ENCODE measurements at regions of chr10 and their contacts with region 1.

Region 1: DNA sequence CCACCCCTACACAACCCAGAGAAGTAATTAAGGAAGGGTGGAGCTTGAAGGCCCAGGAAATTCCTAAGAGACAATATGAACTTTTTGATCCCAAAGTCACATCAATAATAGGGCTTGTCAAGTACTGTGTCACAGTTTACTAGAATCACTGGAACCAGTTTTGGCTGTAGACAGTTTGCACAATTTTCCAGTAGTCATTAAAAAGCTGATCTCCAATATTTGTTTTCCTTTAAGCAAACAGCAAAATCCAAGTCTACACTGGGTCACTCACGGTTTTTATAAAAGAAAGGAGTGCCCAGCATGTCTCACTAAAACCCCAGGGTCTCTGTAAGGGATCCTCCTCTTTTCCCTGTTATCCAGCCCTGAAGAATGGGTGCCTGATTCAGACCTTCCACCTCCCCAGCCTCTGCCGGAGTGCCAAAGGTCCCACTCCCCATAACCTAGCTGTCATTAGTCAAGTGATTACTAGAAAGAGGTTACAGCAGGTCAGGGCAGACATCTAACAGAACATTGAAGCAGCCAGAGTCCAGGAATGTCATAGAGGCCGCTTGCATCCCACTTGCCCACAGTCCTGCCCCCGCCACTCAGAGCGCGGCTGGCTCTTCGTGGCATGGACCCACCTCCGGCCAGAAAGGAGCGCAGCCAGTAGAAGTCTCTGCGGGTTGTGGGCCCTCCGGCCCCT is 556 bp downstream of the SLC25A16 start:
- DNase-seq: no peak
- H3K4me3 Mint-ChIP-seq: peak overlapping the region; percentile 93
- H3K27ac Mint-ChIP-seq: peak overlapping the region; percentile 87
- H3K4me1 Mint-ChIP-seq: peaks cover 5% of the 10 kb centered on the region
- H3K27me3 Mint-ChIP-seq: no peaks in the 10 kb centered on the region

Region 2: DNA sequence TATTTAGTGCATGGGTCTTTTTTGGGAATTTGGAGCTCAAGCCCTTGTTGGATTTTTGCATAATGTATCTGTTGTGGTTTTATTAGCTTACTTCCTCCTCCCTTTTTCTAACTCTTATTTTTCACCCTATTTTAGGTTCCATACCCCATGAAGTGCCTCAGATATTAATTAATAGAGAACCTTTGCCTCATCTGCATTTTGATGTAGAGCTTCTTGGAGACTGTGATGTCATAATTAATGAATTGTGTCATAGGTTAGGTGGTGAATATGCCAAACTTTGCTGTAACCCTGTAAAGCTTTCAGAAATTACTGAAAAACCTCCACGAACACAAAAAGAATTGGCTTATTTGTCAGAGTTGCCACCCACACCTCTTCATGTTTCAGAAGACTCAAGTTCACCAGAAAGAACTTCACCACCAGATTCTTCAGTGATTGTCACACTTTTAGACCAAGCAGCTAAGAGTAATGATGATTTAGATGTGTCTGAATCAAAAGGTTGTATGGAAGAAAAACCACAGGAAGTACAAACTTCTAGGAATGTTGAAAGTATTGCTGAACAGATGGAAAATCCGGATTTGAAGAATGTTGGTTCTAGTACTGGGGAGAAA is 614.3 kb before region 1 on chr10:
- CTCF ChIA-PET with region 1: no interaction called
- intact Hi-C with region 1: no loop called
- DNase-seq: no peak
- H3K4me3 Mint-ChIP-seq: no peak overlapping the region
- H3K27ac Mint-ChIP-seq: peak overlapping the region; percentile 70
- H3K4me1 Mint-ChIP-seq: peaks cover 21% of the 10 kb centered on the region
- H3K27me3 Mint-ChIP-seq: no peaks in the 10 kb centered on the region

Region 3: GRCh38 chr10:68074775-68075549 is 451.8 kb before region 1 on chr10 and contains the start of gene HERC4:
- CTCF ChIA-PET with region 1: no interaction called
- intact Hi-C with region 1: loop called (anchors 1 kb)
- DNase-seq: peak; percentile 92
- H3K4me3 Mint-ChIP-seq: peak within 1 kb of the TSS; percentile 97
- H3K27ac Mint-ChIP-seq: peak within 1 kb of the TSS; percentile 91
- H3K4me1 Mint-ChIP-seq: peaks cover 33% of the 10 kb centered on the region
- H3K27me3 Mint-ChIP-seq: no peaks in the 10 kb centered on the region
- total RNA-seq, gene HERC4: 42.2 to 45.0 TPM

Region 4: DNA sequence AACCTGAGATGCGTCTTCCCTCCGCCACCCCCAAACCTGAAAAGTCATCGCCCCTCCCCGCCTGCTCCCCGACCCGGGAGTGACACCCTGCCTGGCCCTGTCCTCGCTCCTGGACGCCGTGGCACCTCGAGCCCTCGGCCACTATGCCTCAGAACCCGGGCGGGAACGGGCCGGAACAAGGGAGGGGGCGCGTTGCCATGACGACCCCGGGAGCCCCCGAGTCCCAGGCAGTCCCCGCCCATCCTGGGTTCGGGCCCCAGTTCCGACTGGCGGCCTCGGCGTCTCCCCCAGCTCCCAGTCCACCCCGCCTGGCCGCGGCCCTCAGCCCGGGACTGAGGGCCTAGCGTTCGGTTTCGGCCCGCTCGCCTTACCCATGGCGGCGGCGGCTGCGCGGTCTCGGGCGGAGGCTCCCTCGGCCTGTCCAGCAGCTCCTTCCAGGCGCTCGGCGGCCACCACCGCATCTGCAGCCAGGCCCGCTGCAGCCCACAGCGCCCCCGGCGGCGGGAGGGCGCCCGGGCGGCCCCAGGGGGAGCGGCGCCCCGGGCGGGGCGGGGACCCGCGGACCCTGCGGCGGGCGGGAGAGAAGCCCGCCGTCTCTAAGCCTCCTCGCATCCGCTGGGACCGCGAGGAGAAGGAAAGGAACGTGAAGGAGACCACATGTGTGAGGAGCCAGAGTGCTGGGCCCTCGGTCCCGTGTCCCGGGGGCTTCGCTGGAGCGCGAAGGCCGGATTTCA is 119.8 kb before region 1 on chr10 and contains the start of gene RUFY2:
- CTCF ChIA-PET with region 1: no interaction called
- intact Hi-C with region 1: loop called (anchors 1 kb)
- DNase-seq: peak; percentile 73
- H3K4me3 Mint-ChIP-seq: peak within 1 kb of the TSS; percentile 89
- H3K27ac Mint-ChIP-seq: peak within 1 kb of the TSS; percentile 59
- H3K4me1 Mint-ChIP-seq: peaks cover 16% of the 10 kb centered on the region
- H3K27me3 Mint-ChIP-seq: no peaks in the 10 kb centered on the region
- total RNA-seq, gene RUFY2: 5.2 to 6.7 TPM

Region 5: DNA sequence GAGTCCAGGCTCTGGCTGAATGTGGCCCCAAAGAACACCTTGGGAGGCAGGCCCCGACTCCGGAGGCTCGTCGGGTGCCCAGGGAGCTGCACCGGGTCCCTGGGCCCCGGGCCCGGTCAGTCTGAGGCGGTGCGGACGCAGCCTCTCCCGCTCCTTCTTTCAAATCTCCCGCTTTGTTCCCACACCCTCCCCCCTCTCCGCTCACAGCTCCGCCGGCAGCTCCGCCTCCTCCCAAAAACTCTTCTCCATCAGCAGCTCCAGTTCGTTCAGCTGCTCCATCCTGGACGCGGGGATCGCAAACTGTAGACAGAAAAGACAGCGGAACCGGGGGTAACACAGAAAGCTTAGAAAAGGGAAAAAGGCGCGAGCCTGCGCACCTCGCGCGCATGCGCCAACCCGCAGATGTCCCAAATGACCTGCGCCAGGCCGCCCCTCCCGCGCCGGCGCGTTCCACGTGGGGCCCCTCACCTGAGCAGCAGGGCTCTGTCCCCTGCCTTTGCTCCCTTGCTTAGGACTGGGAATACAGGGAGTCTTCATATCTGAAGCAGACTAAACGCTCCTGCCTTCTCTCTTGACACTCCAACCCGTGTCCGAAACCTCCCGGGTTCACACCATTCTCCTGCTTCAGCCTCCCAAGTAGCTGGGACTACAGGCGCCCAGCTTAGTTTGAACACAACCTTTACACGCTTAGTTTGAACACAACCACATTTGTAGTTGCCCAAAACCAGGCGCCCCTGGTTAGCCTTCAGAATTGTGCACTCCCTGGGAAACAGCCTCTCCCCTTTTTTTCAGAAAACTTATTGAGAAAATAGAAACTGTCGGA is 55.0 kb before region 1 on chr10 and contains the start of gene DNA2:
- CTCF ChIA-PET with region 1: no interaction called
- intact Hi-C with region 1: loop called (anchors 1 kb)
- DNase-seq: peak; percentile 81
- H3K4me3 Mint-ChIP-seq: peak within 1 kb of the TSS; percentile 96
- H3K27ac Mint-ChIP-seq: peak within 1 kb of the TSS; percentile 90
- H3K4me1 Mint-ChIP-seq: peaks cover 20% of the 10 kb centered on the region
- H3K27me3 Mint-ChIP-seq: no peaks in the 10 kb centered on the region
- total RNA-seq, gene DNA2: 50.2 to 51.4 TPM

Region 6: DNA sequence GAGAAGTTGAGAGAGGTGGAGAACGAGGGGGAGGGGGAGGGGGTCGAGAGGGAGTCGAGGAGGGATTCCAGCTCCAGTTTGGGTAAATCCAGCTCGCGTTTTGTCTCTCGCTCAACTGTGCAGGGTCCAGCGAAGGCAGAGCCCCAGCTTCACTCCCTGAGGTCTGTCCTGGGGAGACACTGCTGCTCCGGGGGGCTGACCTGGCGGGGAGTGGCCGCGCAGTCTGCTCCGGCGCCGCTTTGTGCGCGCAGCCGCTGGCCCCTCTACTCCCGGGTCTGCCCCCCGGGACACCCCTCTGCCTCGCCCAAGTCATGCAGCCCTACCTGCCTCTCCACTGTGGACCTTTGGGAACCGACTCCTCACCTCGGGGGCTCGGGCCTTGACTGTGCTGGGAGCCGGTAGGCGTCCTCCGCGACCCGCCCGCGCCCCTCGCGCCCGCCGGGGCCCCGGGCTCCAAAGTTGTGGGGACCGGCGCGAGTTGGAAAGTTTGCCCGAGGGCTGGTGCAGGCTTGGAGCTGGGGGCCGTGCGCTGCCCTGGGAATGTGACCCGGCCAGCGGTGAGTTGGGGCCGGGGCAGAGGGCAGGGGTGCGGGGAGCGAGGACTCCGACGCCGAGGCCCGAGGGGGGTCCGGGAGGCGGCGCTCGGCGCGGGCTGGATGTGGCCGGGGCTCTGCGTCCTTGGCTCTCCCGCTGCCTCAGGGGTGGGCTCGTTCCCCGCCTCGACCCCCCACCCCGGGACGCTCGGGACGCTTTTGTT is 33.6 kb after region 1 on chr10 and contains the start of gene TET1:
- CTCF ChIA-PET with region 1: no interaction called
- intact Hi-C with region 1: loop called (anchors 1 kb)
- DNase-seq: peak; percentile 26
- H3K4me3 Mint-ChIP-seq: peak within 1 kb of the TSS; percentile 67
- H3K27ac Mint-ChIP-seq: no peak within 1 kb of the TSS
- H3K4me1 Mint-ChIP-seq: peaks cover 21% of the 10 kb centered on the region
- H3K27me3 Mint-ChIP-seq: peaks cover 41% of the 10 kb centered on the region
- total RNA-seq, gene TET1: 0.48 to 0.57 TPM

Region 7: DNA sequence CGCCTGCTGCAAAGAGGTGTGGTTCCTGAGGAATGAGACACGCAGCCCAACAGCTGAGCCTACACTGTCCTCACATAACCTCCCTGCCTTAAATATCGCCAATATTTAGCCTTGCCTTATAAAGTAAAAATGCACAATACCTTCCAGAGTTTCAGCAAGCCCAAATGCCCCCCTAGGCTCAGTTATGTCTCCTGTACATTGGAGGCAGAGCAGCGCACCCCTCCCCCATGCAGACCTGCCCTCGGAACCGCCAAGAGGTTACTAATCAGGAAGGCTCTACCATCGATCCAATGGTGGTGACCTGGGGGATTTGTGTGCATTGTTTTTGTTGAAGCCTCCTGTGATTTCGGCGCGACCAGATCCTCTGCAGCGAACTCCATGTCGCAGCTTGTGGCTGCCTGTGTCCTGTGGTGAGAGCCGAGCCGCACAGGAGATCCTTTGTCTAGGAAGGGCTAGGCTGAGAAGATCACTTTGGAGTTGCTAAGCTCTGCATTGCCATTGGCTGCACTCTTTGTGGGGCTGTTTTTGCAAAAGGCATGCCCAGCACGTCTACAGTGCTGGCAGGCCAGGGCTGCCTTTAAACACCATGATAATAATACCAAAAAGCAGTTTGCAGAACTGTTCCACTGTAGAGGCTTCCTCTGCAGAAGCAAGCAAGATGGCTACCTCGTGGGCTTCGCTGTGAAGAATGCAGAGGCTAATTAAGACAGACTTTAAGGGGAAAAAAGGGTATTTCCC is 73.4 kb after region 1 on chr10:
- CTCF ChIA-PET with region 1: no interaction called
- intact Hi-C with region 1: loop called (anchors 1 kb)
- DNase-seq: peak; percentile 64
- H3K4me3 Mint-ChIP-seq: peak overlapping the region; percentile 83
- H3K27ac Mint-ChIP-seq: peak overlapping the region; percentile 84
- H3K4me1 Mint-ChIP-seq: peaks cover 28% of the 10 kb centered on the region
- H3K27me3 Mint-ChIP-seq: no peaks in the 10 kb centered on the region